ENCODE measurements at regions of chr7 and their contacts with region 1.

Region 1: GRCh38 chr7:332646-333392 is 42.8 kb downstream of the FOXL3 start:
- DNase-seq: peak; percentile 68
- H3K4me3 Mint-ChIP-seq: peak overlapping the region; percentile 33
- H3K27ac Mint-ChIP-seq: no peak overlapping the region
- H3K4me1 Mint-ChIP-seq: no peaks in the 10 kb centered on the region
- H3K27me3 Mint-ChIP-seq: peaks cover 12% of the 10 kb centered on the region
- CTCF ChIP-seq: peak; percentile 89

Region 2: DNA sequence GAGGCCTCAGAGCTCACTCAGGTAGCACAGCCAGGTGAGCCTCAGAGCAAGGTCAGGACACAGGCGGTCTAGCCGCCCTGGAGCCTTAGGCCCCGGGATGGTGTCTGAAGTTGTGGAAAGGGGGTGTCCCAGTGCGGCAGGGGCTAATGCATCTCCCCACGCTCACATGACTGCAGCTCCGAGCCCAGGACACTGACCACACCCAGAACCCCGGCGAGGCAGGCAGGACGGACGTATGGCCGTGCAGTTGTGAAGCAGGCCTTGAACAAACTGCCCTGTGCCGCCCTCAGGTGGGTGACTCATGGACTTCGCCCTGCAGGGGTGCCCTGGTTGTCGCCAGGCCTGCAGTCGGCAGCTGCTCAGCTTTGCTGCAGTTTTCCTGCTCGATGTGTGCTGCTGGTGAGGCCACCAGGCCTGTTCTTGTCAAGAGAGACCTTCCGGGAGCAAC is 399.3 kb after region 1 on chr7:
- CTCF ChIA-PET with region 1: interaction called, 28 read pairs
- POLR2A ChIA-PET with region 1: interaction called, 4 read pairs
- intact Hi-C with region 1: loop called (anchors 1 kb)
- DNase-seq: peak; percentile 72
- H3K4me3 Mint-ChIP-seq: peak overlapping the region; percentile 19
- H3K27ac Mint-ChIP-seq: no peak overlapping the region
- H3K4me1 Mint-ChIP-seq: peaks cover 25% of the 10 kb centered on the region
- H3K27me3 Mint-ChIP-seq: no peaks in the 10 kb centered on the region
- CTCF ChIP-seq: peak; percentile 30

Region 3: DNA sequence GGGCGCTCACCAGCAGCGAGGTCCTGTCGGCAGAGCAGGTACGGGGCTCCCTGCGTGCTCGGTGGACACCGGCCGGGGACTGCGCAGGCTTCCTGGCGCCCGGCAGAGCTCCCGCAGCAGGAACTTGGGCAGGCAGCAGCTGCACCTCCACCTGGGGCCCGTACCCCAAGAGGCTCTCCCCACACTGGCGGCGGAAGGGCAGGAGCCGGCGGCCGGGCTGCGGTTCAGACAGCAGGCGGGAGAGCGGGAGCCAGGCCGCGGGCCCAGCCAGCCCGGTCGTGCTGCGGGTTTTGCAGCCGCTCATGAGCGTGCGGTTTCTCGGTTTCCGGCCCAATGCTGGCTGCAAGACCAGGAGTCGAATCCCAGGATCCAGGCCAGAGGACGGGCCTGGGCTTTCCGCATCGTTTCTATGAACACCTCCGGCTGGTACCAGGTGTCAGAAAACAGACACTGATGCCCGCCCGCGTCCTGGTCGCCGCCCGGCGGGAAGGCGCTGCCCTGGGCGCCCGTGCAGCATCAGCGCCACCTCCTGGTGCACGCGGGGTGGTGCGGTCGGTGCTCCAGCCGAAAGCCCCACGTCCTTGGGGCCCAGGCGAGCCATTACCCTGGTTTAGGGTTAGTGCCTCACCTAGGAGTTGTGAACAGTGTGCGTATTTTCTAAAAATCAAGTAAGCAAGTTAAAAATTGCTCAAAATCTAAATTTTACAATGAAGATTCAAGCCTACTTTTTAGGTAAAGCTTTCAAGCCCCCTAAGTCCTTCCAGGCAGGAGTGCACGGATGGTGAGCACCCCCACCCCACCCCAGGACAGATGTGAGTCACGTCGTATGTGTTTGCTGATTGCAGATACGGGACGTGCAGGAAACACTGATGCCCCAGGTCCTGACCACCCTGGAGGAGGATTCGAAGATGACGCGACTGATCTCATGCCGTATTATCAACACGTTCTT is 441.6 kb after region 1 on chr7:
- CTCF ChIA-PET with region 1: no interaction called
- POLR2A ChIA-PET with region 1: no interaction called
- intact Hi-C with region 1: loop called (anchors 1 kb)
- DNase-seq: peak; percentile 23
- H3K4me3 Mint-ChIP-seq: no peak overlapping the region
- H3K27ac Mint-ChIP-seq: no peak overlapping the region
- H3K4me1 Mint-ChIP-seq: no peaks in the 10 kb centered on the region
- H3K27me3 Mint-ChIP-seq: no peaks in the 10 kb centered on the region
- CTCF ChIP-seq: peak; percentile 84

Measured in MCF 10A (cell line).